SK-N-SH (cell line): ENCODE measurements at regions of chr17 and their contacts with region 1.

Region 1: DNA sequence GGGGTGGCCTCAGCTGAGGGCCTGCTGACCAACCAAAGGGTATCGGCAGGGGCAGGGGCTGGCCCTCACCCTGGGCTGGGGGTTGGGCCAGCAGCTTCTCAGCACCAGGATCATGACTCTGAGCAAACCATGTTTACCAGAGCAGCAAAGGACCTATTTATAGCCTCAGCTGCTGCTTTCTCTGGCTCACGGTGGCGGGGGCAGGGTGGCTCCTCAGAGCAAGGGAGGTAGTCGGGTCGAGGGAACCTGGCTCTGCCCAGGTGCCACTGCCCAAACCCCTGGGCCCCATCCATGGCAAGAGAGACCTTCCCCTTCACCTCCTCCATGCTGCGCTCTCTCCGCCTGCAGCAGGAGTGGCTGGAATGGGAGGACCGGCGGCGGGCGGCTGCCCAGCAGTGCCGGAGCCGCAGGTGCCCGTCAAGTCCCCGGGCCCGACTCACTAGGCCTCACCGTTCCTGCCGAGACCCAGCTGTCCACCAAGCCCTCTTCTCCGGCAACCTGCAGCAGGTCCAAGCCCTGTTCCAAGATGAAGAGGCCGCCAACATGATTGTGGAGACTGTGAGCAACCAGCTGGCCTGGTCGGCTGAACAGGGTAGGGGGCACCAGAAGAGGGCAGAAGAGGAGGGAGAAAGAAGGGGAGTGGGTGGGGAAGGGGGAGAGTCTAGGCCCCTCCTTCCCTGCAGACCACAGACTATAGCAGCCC is at the start of gene ASB16:
- DNase-seq: peak; percentile 48
- H3K4me3 ChIP-seq: no peak within 1 kb of the TSS
- H3K27ac ChIP-seq: no peak within 1 kb of the TSS
- H3K4me1 ChIP-seq: peaks cover 7 to 11% of the 10 kb centered on the region in 2 experiments; a peak in 1 of 4 replicates
- H3K27me3 ChIP-seq: no peaks in the 10 kb centered on the region
- CTCF ChIP-seq: no peak
- EP300 ChIP-seq: no peak
- RAD21 ChIP-seq: no peak
- polyA plus RNA-seq, gene ASB16: not detected in 2 replicates

Region 2: DNA sequence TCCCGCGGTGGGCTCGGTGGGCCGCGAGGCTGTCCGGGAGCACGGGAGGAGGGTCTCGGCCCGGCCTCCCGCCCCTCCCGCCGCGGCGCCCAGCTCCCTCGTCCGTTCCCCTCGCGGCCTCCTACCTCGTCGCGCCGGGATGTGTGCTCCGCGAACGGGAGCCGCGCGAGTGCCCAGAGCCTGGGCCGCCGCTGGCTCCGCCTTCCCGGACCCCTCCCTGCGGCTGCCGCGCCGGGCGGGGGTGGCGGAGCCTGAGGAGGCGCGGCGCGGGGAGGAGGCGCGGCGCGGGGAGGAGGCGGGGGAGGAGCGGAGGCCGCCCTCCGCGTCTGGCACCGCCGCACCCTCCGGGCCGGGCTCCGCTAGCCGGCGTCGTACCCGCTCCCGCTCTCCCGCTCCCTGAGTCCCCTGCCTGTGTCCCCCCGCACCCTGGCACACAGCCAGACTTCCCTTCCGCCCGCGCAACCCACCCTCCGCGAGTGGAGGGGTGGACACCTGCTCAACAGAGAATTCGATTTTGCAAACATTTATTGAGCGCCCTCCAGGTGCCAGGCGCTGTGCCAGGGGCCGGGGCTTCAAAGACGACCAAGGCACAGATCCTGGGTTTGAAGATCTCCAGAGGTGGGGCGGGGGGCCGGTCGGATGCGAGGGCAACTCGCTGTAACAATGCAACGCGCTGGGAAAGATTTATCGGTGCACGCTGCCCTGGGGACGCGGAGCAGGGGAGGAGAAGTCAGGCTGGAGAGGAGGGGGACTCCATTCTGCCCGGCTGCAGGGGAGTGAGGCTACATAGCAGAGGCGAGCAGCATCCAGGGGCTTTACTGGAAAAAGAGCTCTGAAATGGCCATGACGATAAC is 337.4 kb before region 1 on chr17 and contains the start of gene MPP3:
- CTCF ChIA-PET with region 1: no interaction called
- POLR2A ChIA-PET with region 1: no interaction called
- DNase-seq: peak; percentile 97
- H3K4me3 ChIP-seq: peak within 1 kb of the TSS; percentile 59 to 83
- H3K27ac ChIP-seq: peak within 1 kb of the TSS; percentile 38 to 62; a peak in 2 of 4 replicates
- H3K4me1 ChIP-seq: peaks cover 0 to 9% of the 10 kb centered on the region in 2 experiments; a peak in 1 of 4 replicates
- H3K27me3 ChIP-seq: no peaks in the 10 kb centered on the region
- CTCF ChIP-seq: no peak
- EP300 ChIP-seq: no peak
- RAD21 ChIP-seq: no peak
- polyA plus RNA-seq, gene MPP3: 12.5 and 14.1 TPM in 2 replicates

Region 3: DNA sequence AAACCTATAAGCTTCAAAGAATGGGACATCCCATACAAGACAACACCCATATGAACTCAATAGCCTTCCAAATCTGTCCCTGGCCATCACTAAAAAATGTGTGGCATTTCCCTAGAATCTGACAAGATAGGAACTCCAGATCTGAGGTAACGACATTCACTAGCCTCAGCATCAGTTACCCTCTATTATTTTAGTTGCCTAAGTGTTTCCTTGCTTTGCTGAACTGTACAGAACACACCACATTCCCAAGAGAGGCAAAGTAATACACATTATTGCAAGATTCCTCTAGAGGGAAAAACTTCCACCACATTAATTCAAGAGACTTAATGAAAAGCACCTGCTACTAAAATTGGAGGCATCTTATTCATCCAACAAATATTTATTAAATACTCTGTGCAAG is 109.2 kb before region 1 on chr17:
- CTCF ChIA-PET with region 1: no interaction called
- POLR2A ChIA-PET with region 1: no interaction called
- DNase-seq: no peak
- H3K4me3 ChIP-seq: no peak overlapping the region
- H3K27ac ChIP-seq: no peak overlapping the region
- H3K4me1 ChIP-seq: peaks cover 0 to 7% of the 10 kb centered on the region in 2 experiments; a peak in 1 of 4 replicates
- H3K27me3 ChIP-seq: no peaks in the 10 kb centered on the region
- CTCF ChIP-seq: no peak
- EP300 ChIP-seq: no peak
- RAD21 ChIP-seq: no peak

Region 4: GRCh38 chr17:44132275-44132821 is 38.3 kb before region 1 on chr17:
- CTCF ChIA-PET with region 1: interaction called, 10 read pairs
- POLR2A ChIA-PET with region 1: no interaction called
- DNase-seq: no peak
- H3K4me3 ChIP-seq: no peak overlapping the region
- H3K27ac ChIP-seq: no peak overlapping the region
- H3K4me1 ChIP-seq: peaks cover 0 to 2% of the 10 kb centered on the region in 2 experiments; a peak in 1 of 4 replicates
- H3K27me3 ChIP-seq: no peaks in the 10 kb centered on the region
- CTCF ChIP-seq: no peak
- EP300 ChIP-seq: no peak
- RAD21 ChIP-seq: no peak

Region 5: DNA sequence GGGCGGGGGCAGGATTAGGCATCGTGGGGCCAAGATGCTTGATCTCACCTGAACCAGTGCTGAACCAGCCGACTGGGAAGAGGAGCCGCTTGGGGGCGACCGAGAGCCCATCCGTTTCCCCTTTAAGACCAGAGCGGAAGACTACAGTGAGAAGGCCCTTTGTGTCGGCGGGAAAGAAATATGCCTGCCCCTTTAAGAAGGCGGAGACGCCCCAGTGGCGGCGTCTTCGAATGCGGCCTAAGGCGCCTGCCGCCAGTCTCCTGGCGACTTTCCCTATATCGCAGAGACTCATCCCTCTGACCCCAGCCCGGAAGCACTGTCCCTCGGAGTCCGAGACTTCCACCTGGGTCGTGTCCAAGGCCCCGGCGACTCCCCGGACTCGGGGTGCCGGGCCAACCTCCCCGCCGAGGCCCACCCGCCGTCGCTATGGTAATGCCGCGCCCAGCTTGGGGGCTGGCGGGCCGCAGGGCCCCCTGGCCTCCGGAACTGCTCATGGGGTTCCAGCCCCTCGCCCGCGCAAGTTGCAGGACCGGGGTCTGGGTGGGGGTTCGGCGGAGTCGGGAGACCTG is 28.8 kb before region 1 on chr17 and contains the start of gene HROB:
- CTCF ChIA-PET with region 1: interaction called, 14 read pairs
- POLR2A ChIA-PET with region 1: interaction called, 4 read pairs
- DNase-seq: peak; percentile 92
- H3K4me3 ChIP-seq: peak within 1 kb of the TSS; percentile 65 to 97
- H3K27ac ChIP-seq: peak within 1 kb of the TSS in 1 of 2 experiments; percentile 84; a peak in 2 of 4 replicates
- H3K4me1 ChIP-seq: peaks cover 2 to 13% of the 10 kb centered on the region in 2 experiments; a peak in 3 of 4 replicates
- H3K27me3 ChIP-seq: no peaks in the 10 kb centered on the region
- CTCF ChIP-seq: peak; percentile 89
- EP300 ChIP-seq: no peak
- RAD21 ChIP-seq: peak; percentile 61
- polyA plus RNA-seq, gene HROB: 3.2 and 4.0 TPM in 2 replicates

Region 6: DNA sequence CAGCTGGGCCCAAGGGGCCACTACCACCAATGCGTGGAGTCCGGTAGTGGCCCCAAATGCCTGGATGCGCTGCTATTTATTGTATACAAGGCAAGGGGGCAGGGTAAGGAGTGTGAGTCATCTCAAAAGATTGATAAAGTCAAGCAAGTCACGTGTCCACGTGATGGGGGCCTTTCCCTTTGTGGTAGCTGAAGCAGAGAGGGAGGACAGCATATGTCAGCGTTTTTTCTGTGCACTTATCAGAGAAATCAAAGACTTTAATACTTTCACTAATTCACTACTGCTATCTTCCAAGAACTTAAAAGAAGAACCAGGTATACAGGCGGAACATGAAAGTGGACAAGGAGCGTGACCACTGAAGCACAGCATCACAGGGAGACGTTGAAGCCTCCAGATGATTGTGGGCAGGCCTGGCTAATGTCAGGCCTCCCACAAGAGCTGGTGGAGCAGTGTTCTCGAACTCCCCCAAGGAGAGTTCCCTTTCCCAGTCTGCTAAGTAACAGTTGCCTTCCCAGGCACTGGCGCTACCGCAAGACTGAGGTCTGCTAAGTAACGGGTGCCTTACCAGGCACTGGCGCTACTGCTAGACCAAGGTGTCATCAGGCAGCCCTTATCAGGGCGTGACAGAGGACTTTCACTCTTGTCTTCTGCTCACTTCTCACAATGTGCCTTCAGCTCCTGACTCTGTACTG is 11.0 kb before region 1 on chr17:
- CTCF ChIA-PET with region 1: interaction called, 13 read pairs
- POLR2A ChIA-PET with region 1: no interaction called
- DNase-seq: no peak
- H3K4me3 ChIP-seq: no peak overlapping the region
- H3K27ac ChIP-seq: no peak overlapping the region
- H3K4me1 ChIP-seq: no peaks in the 10 kb centered on the region
- H3K27me3 ChIP-seq: no peaks in the 10 kb centered on the region
- CTCF ChIP-seq: no peak
- EP300 ChIP-seq: no peak
- RAD21 ChIP-seq: no peak

Region 7: GRCh38 chr17:44186307-44187130 is 15.9 kb after region 1 on chr17 and contains the start of gene TMUB2:
- CTCF ChIA-PET with region 1: interaction called, 31 read pairs
- POLR2A ChIA-PET with region 1: interaction called, 5 read pairs
- DNase-seq: peak; percentile 100
- H3K4me3 ChIP-seq: peak within 1 kb of the TSS; percentile 88 to 95
- H3K27ac ChIP-seq: peak within 1 kb of the TSS; percentile 86 to 96
- H3K4me1 ChIP-seq: peaks cover 8 to 16% of the 10 kb centered on the region in 2 experiments; a peak in 2 of 4 replicates
- H3K27me3 ChIP-seq: no peaks in the 10 kb centered on the region
- CTCF ChIP-seq: no peak
- EP300 ChIP-seq: no peak; a peak in 1 of 4 replicates
- RAD21 ChIP-seq: peak; percentile 11; the same call in 1 of the 2 replicates
- polyA plus RNA-seq, gene TMUB2: 49.5 and 62.2 TPM in 2 replicates

Region 8: DNA sequence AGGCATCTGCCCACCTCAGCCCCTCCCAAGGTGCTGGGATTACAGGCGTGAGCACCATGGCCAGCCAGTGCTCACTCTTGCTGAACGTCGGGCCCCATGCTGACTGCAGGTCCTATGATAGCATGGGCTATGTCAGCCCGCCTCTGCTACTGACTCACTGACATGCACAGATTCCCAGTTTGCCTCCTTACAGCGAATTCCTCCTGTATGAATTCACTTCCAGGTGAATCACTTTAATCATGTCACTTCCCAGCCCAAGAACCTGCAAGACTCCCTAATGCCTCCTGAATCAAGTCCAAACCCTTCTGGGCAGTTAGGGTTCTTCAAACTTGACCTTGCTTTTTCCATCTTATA is 64.9 kb after region 1 on chr17:
- CTCF ChIA-PET with region 1: no interaction called
- POLR2A ChIA-PET with region 1: no interaction called
- DNase-seq: no peak
- H3K4me3 ChIP-seq: no peak overlapping the region
- H3K27ac ChIP-seq: no peak overlapping the region
- H3K4me1 ChIP-seq: 0 out of 4 replicates have a peak, but pooled peaks cover 0 to 3% of the 10 kb centered on the region in 2 experiments
- H3K27me3 ChIP-seq: no peaks in the 10 kb centered on the region
- CTCF ChIP-seq: no peak
- EP300 ChIP-seq: no peak
- RAD21 ChIP-seq: no peak